Dorsolateral prefrontal cortex (tissue), 120 donors: ENCODE measurements at regions of chr17 and their contacts with region 1.

Region 1: DNA sequence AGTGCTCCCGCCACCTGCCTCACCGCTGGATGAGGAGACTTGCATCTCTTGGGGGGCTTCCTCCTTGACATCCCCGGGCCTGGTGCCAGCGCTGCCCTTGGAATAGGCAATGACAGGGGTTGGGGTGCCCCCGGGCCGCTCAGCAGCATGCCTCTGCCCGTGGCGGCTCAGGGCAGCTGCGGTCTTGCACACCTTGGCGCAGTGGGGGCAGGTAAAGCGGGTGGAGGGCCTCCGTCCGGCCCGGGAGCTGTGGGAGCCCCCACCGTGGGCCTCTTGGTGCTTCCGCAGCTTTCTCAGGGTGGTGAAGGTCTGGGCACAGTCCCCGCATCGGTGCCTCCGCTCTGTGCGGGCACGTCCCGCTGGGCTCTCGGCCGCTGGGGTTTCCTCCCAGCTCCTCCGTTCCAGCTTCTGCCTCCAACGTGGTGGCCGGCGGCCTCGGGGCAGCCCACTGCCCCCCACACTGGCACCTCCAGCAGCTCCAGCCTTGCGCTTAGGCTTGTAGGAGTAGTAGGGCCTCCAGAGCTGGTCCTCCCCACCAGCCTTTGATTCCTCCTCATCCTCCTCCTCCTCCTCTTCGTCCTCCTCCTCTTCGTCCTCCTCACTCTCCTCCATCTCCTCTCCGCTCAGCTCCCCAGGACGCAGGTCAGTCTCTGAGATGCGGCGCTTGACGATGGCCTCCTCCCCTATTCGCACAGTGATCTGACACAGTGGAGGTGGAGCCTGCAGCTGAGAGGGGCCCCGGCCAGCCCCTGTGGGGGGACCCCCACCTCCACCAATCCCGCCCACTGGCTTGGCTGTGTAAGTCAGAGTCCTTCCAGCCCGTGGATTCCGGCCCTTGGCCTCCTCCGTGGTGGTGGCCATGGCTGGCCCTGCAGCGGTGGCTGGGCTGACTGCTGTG is 16.7 kb downstream of the ZBTB4 start:
- DNase-seq: no peak
- H3K4me3 ChIP-seq: no peak overlapping the region
- H3K27ac ChIP-seq: peak overlapping the region in 2 of 59 donors; percentile 15 to 18
- H3K27me3 ChIP-seq: no peaks in the 10 kb centered on the region
- CTCF ChIP-seq: no peak

Region 2: DNA sequence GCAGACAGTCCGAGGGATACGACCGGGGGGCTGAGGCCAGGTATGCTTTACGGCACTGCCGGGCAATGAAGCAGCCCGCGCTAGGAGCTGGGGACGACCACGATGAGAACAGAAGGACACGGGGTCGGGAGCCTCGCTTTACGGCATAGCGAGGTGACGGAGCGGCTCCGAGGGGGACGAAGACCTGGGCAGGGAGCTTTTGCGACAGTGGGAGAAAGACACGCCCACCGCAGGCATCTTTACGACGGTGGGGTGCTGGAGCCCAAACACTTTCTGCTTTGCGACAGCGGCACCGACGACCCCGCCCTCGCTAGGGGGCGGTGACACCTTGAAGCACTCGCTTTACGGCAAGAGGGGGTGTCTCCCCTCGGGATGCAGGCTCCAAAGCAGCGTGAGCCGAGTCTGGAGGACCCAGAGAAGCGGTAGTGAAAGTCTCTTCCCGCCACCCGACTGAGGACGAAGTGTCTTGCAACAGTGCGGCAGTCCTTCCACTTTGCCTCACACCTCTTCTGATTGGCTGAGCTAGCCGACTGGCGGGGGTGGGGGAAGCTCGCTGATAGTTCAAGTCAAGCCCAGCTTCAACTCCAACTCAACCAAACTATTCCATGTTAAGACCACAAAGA is 133.2 kb before region 1 on chr17:
- intact Hi-C with region 1: no loop called
- DNase-seq: peak; percentile 95 to 98 (median 96)
- H3K4me3 ChIP-seq: peak overlapping the region; percentile 69 to 100 (median 94)
- H3K27ac ChIP-seq: peak overlapping the region; percentile 65 to 98 (median 92)
- H3K27me3 ChIP-seq: no peaks in the 10 kb centered on the region
- CTCF ChIP-seq: peak in 36 of 56 donors; percentile 8 to 57 (median 32)

Region 3: GRCh38 chr17:7444682-7445618 is 17.8 kb before region 1 on chr17 and contains the start of gene CHRNB1:
- intact Hi-C with region 1: no loop called
- DNase-seq: peak in 9 of 10 donors; percentile 74 to 87 (median 78)
- H3K4me3 ChIP-seq: peak within 1 kb of the TSS; percentile 33 to 77 (median 56)
- H3K27ac ChIP-seq: peak within 1 kb of the TSS in 10 of 59 donors; percentile 8 to 77 (median 53)
- H3K27me3 ChIP-seq: peaks cover 0 to 64% (median 26%) of the 10 kb centered on the region in 45 donors
- CTCF ChIP-seq: peak in 23 of 56 donors; percentile 12 to 56 (median 28)
- total RNA-seq, gene CHRNB1: 6.3 to 21.6 (median 12.1) TPM

Region 4: DNA sequence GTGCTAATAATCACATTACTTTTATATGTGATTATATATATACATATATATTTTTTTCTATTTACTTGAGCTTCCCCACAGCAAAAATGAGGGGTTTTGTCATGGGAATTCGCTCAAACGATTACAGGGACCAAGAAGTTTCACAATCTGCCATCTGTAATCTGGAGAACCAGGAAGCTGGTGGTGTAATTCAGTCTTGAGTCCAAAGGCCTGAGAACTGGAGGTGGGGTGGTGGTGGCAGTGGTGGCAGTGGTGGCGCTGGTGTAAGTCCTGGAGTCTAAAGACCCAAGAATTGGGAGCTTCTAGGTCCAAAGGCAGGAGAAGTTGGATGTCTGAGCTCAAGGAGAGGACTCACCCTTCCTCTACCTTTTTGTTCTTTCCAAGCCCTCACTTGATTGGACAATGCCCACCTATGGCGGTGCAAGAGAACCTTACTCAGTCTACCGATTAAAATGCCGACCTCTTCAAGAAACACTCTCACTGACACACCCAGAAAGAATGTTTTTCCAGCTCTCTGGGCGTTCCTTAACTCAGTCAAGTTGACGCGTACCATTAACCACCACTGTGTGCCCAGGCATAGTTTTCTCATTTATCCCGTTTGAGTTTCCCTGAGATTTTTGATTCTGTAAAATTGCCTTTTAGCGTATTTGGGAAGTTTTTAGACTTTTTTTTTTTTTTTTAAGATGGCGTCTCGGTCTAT is 53.3 kb after region 1 on chr17:
- intact Hi-C with region 1: loop called in 1 of 2 experiments (anchors 2 kb)
- DNase-seq: no peak
- H3K4me3 ChIP-seq: no peak overlapping the region
- H3K27ac ChIP-seq: peak overlapping the region in 2 of 59 donors; percentile 15 to 33
- H3K27me3 ChIP-seq: no peaks in the 10 kb centered on the region
- CTCF ChIP-seq: no peak